Mucosa of descending colon (tissue), 3 donors: ENCODE measurements at regions of chr17 and their contacts with region 1.

Region 1: GRCh38 chr17:17681187-17681848 is at the start of gene RAI1:
- DNase-seq: peak; percentile 75 to 86 (median 83)
- ATAC-seq: peak; percentile 75
- H3K4me3 ChIP-seq: peak within 1 kb of the TSS; percentile 39
- H3K4me1 ChIP-seq: peaks cover 26% of the 10 kb centered on the region
- CTCF ChIP-seq: peak; percentile 66
- total RNA-seq, gene RAI1: 12.9 to 29.2 (median 17.0) TPM

Region 2: GRCh38 chr17:17783116-17783824 is 102.0 kb after region 1 on chr17:
- intact Hi-C with region 1: loop called in 1 of 2 experiments (anchors 10 kb)
- DNase-seq: peak; percentile 79 to 81 (median 80)
- ATAC-seq: peak; percentile 75
- H3K4me3 ChIP-seq: peak overlapping the region; percentile 11
- H3K4me1 ChIP-seq: peaks cover 21% of the 10 kb centered on the region
- CTCF ChIP-seq: no peak

Region 3: GRCh38 chr17:17839791-17840707 is 158.7 kb after region 1 on chr17:
- intact Hi-C with region 1: loop called in 1 of 2 experiments (anchors 10 kb)
- DNase-seq: peak; percentile 93 to 97 (median 96)
- ATAC-seq: peak; percentile 75
- H3K4me3 ChIP-seq: peak overlapping the region; percentile 24
- H3K4me1 ChIP-seq: peaks cover 54% of the 10 kb centered on the region
- CTCF ChIP-seq: no peak

Region 4: DNA sequence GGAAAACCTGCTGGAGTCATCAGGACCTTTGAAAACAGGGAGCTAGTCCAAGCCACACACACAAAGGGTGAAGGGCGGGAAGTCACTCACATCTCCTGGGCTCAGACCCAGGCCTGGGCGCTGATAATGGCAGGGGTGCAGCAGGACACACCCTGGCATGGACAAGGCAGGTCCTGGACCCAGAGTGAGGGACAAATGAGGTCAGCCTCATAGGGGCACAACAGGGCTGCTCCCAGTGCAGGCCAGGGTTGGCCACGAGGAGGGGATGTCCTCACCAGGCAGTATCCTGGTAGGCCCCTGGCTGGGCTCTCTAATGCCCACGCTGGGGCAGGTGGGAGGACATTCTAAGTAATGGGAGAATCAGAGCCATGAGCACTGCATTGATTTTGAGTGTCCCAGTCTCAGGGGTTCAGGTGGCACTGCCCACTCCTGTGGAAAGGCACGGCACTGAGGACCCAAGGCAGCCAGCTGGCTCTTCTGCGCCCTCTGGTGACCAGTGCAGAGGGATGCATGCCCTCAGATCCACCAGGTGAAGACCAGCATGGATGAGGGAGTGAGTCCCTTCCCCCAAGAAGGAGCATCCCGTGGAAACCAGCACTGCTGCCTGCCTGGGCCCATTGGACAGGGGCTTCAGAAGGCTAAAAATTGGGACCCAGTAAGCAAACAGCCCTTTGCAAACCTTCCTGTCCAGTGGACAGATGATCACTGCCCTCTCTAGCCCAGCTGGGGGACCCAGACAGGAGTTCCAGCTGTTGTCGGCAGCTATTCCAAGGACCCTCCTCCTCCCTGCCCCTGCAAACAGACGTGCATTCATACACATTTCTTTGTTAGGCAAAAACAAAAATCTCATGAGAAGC is 178.8 kb after region 1 on chr17:
- intact Hi-C with region 1: loop called in 1 of 2 experiments (anchors 2 kb)
- DNase-seq: peak; percentile 75 to 78 (median 75)
- ATAC-seq: peak; percentile 95
- H3K4me3 ChIP-seq: no peak overlapping the region
- H3K4me1 ChIP-seq: peaks cover under 1% of the 10 kb centered on the region
- CTCF ChIP-seq: peak; percentile 93